ENCODE measurements at regions of chr12 and their contacts with region 1.

Region 1: DNA sequence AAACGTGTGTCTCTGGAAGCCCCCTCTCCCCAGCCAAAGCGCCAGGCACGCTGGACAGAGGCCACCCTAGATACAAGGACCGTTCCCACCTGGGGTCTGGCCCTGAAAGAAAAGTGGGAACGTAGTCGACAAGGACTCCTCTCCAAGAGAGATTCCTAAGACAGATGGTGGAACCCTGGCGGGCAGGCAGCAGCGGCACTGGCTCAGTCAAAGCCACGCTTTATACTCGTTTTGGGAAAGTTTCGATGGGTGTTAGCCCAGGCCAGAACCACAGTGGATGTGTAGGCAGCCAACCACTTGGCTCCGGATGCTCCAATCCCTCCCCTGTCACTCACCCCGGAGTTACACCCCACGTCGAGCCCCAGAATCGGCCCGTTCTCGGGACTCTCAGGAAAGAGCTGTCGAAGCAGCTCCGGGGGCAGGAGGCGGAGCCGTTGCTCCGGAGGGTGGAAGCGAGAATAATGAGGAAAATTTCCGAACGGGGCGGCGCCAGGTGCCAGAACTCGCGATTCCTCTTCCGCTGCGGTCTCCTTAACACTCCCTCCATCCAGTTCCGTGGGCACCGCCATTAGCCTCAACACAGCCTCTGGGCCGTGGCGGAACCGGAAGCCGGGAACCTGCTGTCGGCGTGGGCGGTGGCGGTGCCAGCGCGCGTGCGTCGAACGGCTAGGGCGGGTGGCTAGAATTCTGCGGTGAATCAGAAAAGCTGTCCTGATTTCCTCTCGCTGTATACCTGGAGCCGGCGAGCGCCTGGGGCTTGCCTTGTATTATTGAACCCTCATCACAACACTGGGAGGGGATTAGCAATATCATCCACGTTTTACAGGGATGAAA is at the start of gene BCDIN3D:
- DNase-seq: peak; percentile 90
- H3K4me3 ChIP-seq: peak within 1 kb of the TSS; percentile 47 to 55
- H3K27ac ChIP-seq: peak within 1 kb of the TSS; percentile 85 to 86
- H3K4me1 ChIP-seq: no peaks in the 10 kb centered on the region
- H3K27me3 ChIP-seq: no peaks in the 10 kb centered on the region
- CTCF ChIP-seq: no peak
- POLR2A ChIP-seq: peak; percentile 78
- total RNA-seq, gene BCDIN3D: 3.0 to 8.0 TPM

Region 2: DNA sequence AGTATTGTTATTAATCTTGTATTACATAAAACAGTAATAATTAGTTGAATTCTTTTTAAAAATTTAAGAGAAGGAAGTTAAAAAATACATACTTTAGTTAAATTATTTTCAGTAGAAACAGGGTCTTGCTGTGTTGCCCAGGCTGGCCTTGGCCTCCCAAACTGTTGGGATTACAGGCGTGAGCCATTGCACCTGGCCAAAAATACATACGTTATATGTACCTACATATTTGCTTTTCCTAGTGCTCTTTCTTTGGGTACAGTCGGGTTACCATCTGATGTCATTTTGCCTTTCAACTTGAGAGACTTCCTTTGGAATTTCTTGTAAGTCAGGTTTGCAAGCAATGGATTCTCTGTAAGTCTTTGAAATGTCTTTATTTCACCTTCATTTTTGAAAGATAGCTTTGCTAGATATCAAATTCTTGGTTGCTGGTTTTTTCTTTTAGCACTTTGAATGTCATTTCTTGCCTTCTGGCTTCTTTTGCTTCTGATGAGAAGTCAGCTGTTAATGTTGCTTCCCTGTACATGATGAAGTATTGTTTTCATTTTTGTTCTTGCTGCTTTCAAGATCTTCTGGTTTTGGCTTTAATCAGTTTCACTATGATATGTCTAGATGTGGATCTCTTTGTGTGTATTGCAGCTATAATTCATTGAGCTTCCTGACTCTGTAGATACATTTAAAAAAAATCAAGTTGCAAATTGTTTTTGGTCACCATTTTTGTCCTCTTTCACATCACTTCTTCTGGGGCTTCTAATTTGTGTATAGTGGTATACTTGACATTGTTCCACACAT is 391.1 kb before region 1 on chr12:
- intact Hi-C with region 1: no loop called
- DNase-seq: no peak
- H3K4me3 ChIP-seq: no peak overlapping the region
- H3K27ac ChIP-seq: no peak overlapping the region
- H3K4me1 ChIP-seq: no peaks in the 10 kb centered on the region
- H3K27me3 ChIP-seq: no peaks in the 10 kb centered on the region
- CTCF ChIP-seq: no peak
- POLR2A ChIP-seq: no peak

Region 3: DNA sequence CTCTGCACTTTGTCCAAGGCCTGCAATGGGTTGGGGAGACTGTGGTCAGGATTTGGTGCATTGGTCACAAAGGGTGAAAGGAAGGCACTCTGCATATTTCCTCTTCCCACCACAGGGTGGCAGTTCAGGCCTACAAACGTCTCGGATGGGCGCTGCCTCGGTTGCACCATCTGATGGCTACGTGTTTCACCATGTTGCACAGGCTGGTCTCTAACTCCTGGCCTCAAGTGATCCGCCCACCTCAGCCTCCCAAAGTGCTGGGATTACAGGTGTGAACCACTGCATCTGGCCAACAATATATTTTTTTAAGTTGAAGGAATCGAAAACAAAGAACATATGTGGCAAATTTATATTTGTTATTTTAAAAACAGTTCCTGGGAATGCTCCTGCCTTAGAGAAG is 66.3 kb before region 1 on chr12:
- intact Hi-C with region 1: loop called (anchors 5 kb)
- DNase-seq: peak; percentile 51
- H3K4me3 ChIP-seq: no peak overlapping the region
- H3K27ac ChIP-seq: no peak overlapping the region
- H3K4me1 ChIP-seq: no peaks in the 10 kb centered on the region
- H3K27me3 ChIP-seq: no peaks in the 10 kb centered on the region
- CTCF ChIP-seq: peak in 3 of 4 experiments; percentile 62 to 82 (median 71)
- POLR2A ChIP-seq: no peak

Region 4: DNA sequence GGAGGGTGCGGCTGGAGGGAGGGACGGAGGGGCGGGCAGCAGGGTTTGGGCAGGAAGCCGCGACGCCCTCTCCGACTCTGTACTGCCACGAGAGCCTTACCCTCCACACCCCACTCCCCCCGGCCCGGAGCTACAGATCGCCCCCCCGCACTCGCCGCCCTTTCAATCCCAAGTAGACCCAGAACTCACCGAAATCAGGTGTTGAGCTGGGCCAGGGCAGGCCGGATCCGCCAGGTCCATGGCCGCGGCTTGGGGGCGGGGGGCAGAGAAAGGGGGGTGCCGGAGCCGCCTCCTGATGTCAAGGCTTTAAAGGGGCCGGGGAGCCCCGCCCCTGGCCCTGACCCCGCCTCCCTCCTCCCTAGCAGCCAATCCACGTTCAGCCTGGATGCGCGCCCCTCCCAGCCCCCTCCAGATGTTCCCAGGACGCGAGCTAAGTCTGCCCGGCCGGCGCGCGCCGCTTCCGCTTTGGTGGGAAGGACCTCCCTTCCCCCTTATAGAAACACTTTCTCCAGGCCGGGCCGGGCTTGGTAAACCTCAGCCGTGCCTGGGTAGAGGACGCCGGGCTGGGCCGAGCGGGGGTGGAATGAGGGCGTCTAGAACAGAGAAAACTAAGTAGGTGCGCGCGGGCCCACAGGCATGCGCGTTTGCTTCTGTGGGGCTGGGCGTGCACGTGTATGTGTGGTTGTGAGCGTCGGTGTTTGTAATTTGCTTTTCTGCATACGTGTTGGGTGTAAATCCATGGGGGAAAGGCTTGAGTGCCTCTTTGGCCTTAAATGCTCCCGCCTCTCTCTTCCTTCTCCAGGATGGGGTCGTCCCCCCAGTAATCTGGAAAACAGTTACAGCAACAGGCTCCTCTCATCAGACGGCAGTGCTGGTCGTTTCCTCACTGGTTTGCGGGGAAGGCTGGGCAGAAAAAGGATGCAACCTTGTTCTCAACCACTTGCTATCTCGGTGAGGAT is 14.3 kb before region 1 on chr12 and contains the start of gene NCKAP5L:
- intact Hi-C with region 1: loop called (anchors 1 kb)
- DNase-seq: peak; percentile 95
- H3K4me3 ChIP-seq: peak within 1 kb of the TSS; percentile 67 to 96
- H3K27ac ChIP-seq: peak within 1 kb of the TSS; percentile 84 to 87
- H3K4me1 ChIP-seq: no peaks in the 10 kb centered on the region
- H3K27me3 ChIP-seq: no peaks in the 10 kb centered on the region
- CTCF ChIP-seq: peak in 1 of 4 experiments; percentile 17
- POLR2A ChIP-seq: peak; percentile 45
- total RNA-seq, gene NCKAP5L: 17.3 to 63.1 TPM